ENCODE measurements at regions of chr7 and their contacts with region 1.

Region 1: DNA sequence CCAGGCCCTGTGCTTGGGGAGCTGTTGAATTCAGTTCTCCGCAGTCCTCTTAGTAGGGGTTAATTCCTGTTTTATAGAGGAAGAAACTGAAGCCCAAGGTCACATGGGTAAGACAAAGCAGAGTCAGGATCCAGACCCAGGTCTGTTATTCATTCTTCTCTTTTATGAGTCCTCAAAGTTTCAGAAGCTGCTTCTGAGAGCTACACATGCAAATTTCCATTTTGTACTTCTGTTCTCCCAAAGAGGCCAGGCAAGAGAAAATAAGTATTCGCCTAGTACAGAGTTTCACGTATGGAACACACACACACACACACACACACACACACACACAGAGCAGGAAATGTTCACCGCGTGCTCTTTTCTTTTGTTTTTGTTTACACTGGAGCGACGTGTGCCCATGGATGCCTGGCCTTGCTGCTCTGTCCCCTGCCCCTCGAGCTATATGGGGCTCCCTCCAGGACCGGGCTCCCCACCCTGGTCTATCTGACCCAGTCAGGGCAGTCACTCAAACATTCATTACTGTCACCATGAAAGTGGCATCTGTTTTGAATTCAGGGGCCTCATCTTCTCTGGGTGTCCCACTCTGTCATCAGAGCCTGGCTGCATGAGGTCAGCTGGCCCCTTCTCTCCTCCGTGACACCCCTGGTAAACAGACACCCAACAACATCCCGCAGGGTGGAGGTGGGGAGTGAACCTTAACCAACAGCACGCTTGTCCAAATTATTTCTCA is 84.4 kb downstream of the TNS3 start:
- H3K4me3 Mint-ChIP-seq: peak overlapping the region; percentile 65
- H3K27ac Mint-ChIP-seq: peak overlapping the region; percentile 93
- H3K4me1 Mint-ChIP-seq: peaks cover 90% of the 10 kb centered on the region
- H3K27me3 Mint-ChIP-seq: no peaks in the 10 kb centered on the region

Region 2: DNA sequence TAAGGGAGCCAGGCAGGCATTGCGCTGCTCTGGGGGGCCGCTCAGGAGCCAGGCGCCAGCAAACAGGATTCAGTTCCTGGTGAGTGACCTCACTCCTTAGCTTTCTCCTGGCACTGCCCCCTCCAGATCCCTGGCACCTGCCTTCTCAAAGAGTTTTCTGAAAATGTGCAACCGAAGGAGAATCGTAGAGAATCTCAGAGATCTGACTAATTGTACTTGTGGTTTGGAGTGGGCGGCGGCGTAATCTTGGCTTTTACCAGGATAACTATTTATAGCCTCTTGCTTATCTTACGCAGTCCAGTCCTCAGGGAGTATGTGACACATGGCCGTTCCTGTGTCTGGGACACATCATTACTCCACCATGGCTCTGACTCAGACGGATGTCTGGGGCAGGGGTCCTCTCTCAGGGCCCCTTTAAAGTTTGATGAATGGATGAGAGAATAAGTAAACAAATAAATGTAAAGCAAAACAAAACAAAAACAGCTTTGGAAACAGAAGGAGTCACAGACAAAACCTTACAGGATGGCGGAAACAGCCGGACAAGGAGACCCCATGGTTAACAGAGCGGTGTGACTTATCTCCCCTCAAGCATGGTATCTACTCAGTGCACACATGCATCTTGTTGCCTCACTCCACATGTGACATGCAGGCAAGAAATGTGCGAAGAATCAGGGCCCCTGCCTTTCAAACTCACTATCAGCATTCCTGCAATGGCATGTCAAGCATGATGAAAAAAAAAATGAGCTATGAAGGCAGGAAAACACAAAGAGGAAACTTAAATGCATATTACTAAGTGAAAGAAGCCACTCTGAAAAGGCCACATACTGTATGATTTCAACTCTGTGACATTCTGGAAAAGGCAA is 15.3 kb before region 1 on chr7:
- intact Hi-C with region 1: loop called (anchors 2 kb)
- H3K4me3 Mint-ChIP-seq: peak overlapping the region; percentile 41
- H3K27ac Mint-ChIP-seq: peak overlapping the region; percentile 86
- H3K4me1 Mint-ChIP-seq: peaks cover 87% of the 10 kb centered on the region
- H3K27me3 Mint-ChIP-seq: no peaks in the 10 kb centered on the region

Region 3: GRCh38 chr7:47552621-47553020 is 55.1 kb after region 1 on chr7:
- intact Hi-C with region 1: no loop called
- H3K4me3 Mint-ChIP-seq: no peak overlapping the region
- H3K27ac Mint-ChIP-seq: peak overlapping the region; percentile 49
- H3K4me1 Mint-ChIP-seq: peaks cover 66% of the 10 kb centered on the region
- H3K27me3 Mint-ChIP-seq: no peaks in the 10 kb centered on the region

Region 4: DNA sequence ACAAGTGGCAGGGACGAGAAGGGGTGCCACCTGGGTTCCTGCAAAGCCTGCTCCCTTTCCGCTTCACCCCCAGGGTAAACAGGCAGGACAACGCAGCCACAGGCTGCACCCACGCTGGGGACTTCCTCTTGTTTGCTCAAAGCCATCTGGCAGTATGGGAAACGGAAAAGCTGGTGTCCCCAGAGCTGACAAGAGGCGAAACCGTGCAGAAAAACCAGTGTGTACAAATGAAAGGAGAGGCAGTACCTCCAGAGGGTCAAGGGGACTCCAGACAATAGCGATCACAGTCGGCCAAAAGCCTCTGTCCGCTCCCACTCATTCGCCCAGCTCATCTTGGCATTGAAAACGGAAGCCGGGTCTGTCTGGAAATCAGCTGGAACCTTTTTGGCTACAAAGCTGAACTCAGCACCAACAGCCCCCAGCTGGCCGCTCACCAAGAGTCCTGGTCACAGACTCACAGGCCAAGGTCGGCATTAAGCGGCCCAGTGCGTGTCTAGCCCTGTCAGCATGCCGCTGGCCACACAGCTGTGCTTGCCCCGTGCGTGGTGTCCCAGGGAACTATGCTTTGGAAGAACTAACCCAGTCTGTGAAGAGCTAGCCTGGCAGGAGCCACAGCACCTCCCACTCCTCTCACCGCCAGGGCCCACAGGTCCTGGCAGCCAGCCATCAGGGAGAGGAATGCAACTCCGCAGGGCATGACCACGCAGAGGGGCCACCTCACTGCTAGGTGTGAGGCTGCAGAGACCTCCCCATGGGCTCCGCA is 74.0 kb after region 1 on chr7:
- intact Hi-C with region 1: loop called (anchors 5 kb)
- H3K4me3 Mint-ChIP-seq: peak overlapping the region; percentile 60
- H3K27ac Mint-ChIP-seq: peak overlapping the region; percentile 90
- H3K4me1 Mint-ChIP-seq: peaks cover 87% of the 10 kb centered on the region
- H3K27me3 Mint-ChIP-seq: no peaks in the 10 kb centered on the region

Measured in dendritic cell treated with granulocyte-macrophage colony-stimulating factor and Interleukin-4, amounts not matched to agents 40 ng/mL and 50 ng/mL, for 4 days (primary cell).